ENCODE measurements at regions of chr10 and their contacts with region 1.

Region 1: GRCh38 chr10:24556750-24557742 is 166.6 kb downstream of the ARHGAP21 start:
- DNase-seq: peak; percentile 68 to 71
- H3K4me3 ChIP-seq: no peak overlapping the region
- H3K4me3 Mint-ChIP-seq: no peak overlapping the region
- H3K27ac Mint-ChIP-seq: no peak overlapping the region
- H3K4me1 ChIP-seq: 0 out of 2 replicates have a peak, but pooled peaks cover 2% of the 10 kb centered on the region
- H3K4me1 Mint-ChIP-seq: peaks cover 8% of the 10 kb centered on the region
- H3K27me3 ChIP-seq: no peaks in the 10 kb centered on the region
- H3K27me3 Mint-ChIP-seq: no peaks in the 10 kb centered on the region
- CTCF ChIP-seq: peak; percentile 86 to 87

Region 2: GRCh38 chr10:23158370-23158769 is 1398.7 kb before region 1 on chr10:
- CTCF ChIA-PET with region 1: no interaction called
- POLR2A ChIA-PET with region 1: no interaction called
- intact Hi-C with region 1: loop called (anchors 5 kb)
- DNase-seq: peak; percentile 61 to 67
- H3K4me3 ChIP-seq: no peak overlapping the region
- H3K4me3 Mint-ChIP-seq: no peak overlapping the region
- H3K27ac Mint-ChIP-seq: no peak overlapping the region
- H3K4me1 ChIP-seq: 0 out of 2 replicates have a peak, but pooled peaks cover 4% of the 10 kb centered on the region
- H3K4me1 Mint-ChIP-seq: no peaks in the 10 kb centered on the region
- H3K27me3 ChIP-seq: no peaks in the 10 kb centered on the region
- H3K27me3 Mint-ChIP-seq: peaks cover 21% of the 10 kb centered on the region
- CTCF ChIP-seq: peak; percentile 95 to 96

Region 3: GRCh38 chr10:23525406-23525805 is 1031.6 kb before region 1 on chr10:
- CTCF ChIA-PET with region 1: no interaction called
- POLR2A ChIA-PET with region 1: no interaction called
- intact Hi-C with region 1: loop called (anchors 10 kb)
- DNase-seq: no peak
- H3K4me3 ChIP-seq: no peak overlapping the region
- H3K4me3 Mint-ChIP-seq: no peak overlapping the region
- H3K27ac Mint-ChIP-seq: no peak overlapping the region
- H3K4me1 ChIP-seq: no peaks in the 10 kb centered on the region
- H3K4me1 Mint-ChIP-seq: no peaks in the 10 kb centered on the region
- H3K27me3 ChIP-seq: no peaks in the 10 kb centered on the region
- H3K27me3 Mint-ChIP-seq: peaks cover 8% of the 10 kb centered on the region
- CTCF ChIP-seq: no peak

Region 4: GRCh38 chr10:24201503-24202180 is 355.4 kb before region 1 on chr10:
- CTCF ChIA-PET with region 1: no interaction called
- POLR2A ChIA-PET with region 1: no interaction called
- intact Hi-C with region 1: loop called (anchors 1 kb)
- DNase-seq: no peak
- H3K4me3 ChIP-seq: no peak overlapping the region
- H3K4me3 Mint-ChIP-seq: no peak overlapping the region
- H3K27ac Mint-ChIP-seq: peak overlapping the region; percentile 28
- H3K4me1 ChIP-seq: peaks cover 21% of the 10 kb centered on the region
- H3K4me1 Mint-ChIP-seq: peaks cover 28% of the 10 kb centered on the region
- H3K27me3 ChIP-seq: no peaks in the 10 kb centered on the region
- H3K27me3 Mint-ChIP-seq: no peaks in the 10 kb centered on the region
- CTCF ChIP-seq: no peak

Region 5: DNA sequence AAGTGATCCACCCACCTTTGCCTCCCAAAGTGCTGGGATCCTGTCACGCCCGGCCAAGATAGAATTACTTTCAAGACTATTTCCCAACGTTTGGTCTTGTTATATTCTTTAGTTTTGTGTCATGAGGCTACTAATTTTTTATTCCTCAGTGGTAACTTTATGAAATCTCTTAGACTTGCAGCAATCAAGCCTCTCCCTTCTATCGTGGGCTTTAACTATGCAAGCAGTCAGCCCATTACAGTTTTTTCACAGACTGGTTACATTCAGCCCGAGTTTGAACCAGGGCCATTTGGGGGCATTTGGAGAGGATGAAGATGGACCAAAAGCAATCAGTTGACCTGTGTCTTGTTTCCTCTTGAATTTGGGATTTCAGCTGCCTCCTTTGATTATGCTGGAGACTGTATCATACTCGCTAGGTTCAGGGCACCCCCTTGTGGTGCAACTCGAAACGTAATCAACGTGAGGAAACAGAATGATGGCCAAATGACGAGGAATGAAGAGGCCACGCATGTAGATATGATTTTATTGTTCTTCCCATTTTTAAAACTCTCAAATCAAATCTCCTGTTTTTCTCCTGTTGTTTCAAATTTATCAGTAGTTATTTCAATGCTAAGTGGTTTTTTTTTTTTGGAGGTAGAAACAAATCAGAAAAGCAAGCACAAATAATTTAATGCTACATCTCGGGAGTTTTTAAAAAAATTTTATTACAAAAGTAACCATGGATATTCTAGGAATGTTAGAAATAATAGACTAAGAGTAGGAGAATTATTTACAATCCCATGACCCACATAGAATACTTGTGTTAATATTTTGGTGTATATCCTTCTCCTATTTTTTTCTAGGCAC is 196.5 kb before region 1 on chr10:
- CTCF ChIA-PET with region 1: no interaction called
- POLR2A ChIA-PET with region 1: no interaction called
- intact Hi-C with region 1: loop called (anchors 1 kb)
- DNase-seq: peak; percentile 75 to 84
- H3K4me3 ChIP-seq: no peak overlapping the region
- H3K4me3 Mint-ChIP-seq: no peak overlapping the region
- H3K27ac Mint-ChIP-seq: peak overlapping the region; percentile 36
- H3K4me1 ChIP-seq: no peaks in the 10 kb centered on the region
- H3K4me1 Mint-ChIP-seq: peaks cover 7% of the 10 kb centered on the region
- H3K27me3 ChIP-seq: no peaks in the 10 kb centered on the region
- H3K27me3 Mint-ChIP-seq: no peaks in the 10 kb centered on the region
- CTCF ChIP-seq: peak; percentile 91 to 92

Region 6: GRCh38 chr10:24383681-24384106 is 173.4 kb before region 1 on chr10:
- CTCF ChIA-PET with region 1: no interaction called
- POLR2A ChIA-PET with region 1: no interaction called
- intact Hi-C with region 1: loop called (anchors 5 kb)
- DNase-seq: peak; percentile 87 to 90
- H3K4me3 ChIP-seq: no peak overlapping the region
- H3K4me3 Mint-ChIP-seq: peak overlapping the region; percentile 58
- H3K27ac Mint-ChIP-seq: peak overlapping the region; percentile 92
- H3K4me1 ChIP-seq: peaks cover 31% of the 10 kb centered on the region
- H3K4me1 Mint-ChIP-seq: peaks cover 23% of the 10 kb centered on the region
- H3K27me3 ChIP-seq: no peaks in the 10 kb centered on the region
- H3K27me3 Mint-ChIP-seq: no peaks in the 10 kb centered on the region
- CTCF ChIP-seq: peak; percentile 60 to 67

Region 7: GRCh38 chr10:24518981-24519597 is 38.0 kb before region 1 on chr10:
- CTCF ChIA-PET with region 1: interaction called, 3 read pairs
- POLR2A ChIA-PET with region 1: no interaction called
- intact Hi-C with region 1: loop called (anchors 1 kb)
- DNase-seq: peak; percentile 62 to 78
- H3K4me3 ChIP-seq: no peak overlapping the region
- H3K4me3 Mint-ChIP-seq: no peak overlapping the region
- H3K27ac Mint-ChIP-seq: no peak overlapping the region
- H3K4me1 ChIP-seq: no peaks in the 10 kb centered on the region
- H3K4me1 Mint-ChIP-seq: peaks cover 8% of the 10 kb centered on the region
- H3K27me3 ChIP-seq: no peaks in the 10 kb centered on the region
- H3K27me3 Mint-ChIP-seq: no peaks in the 10 kb centered on the region
- CTCF ChIP-seq: peak; percentile 85 to 93